Mammary epithelial cell (primary cell): ENCODE measurements at regions of chr11 and their contacts with region 1.

Region 1: GRCh38 chr11:130861902-130862860 is 54.1 kb downstream of the SNX19 start:
- DNase-seq: peak; percentile 70
- H3K4me3 ChIP-seq: peak overlapping the region in 1 of 3 experiments; percentile 23
- H3K27ac ChIP-seq: no peak overlapping the region
- H3K4me1 ChIP-seq: peaks cover 3% of the 10 kb centered on the region
- H3K27me3 ChIP-seq: no peaks in the 10 kb centered on the region
- CTCF ChIP-seq: peak; percentile 98 to 100

Region 2: DNA sequence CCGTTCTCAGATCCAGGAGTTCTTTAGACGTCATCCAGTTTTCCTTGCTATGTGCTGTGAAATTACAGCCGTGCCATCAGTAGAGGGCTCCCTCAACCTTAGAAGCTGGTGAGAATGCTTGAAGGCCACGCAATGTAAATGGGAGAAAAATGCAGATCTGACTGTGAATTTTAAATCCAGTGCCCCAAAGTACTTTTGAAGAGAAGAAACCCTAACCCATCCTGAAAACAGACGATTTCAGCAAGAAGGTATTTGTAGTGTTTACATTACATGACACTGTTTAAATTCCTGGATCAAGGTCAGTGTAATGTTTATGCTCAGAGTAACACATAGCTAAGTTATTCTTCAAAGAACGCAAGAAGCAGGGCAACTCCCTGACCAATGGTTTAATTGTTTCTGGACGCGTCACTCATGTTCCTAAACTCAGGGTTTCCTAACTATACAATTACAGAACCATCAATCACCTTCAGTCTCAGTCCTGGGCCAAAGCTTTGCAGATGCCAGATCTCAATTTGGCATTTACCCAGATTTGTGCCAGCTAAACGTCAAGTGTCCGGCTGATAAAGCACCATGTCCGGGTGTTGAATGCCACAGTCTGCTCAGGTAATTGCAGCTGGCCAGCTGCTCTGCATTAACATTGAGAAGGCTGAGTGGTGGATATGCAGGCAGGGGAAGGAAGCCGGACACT is 472.0 kb before region 1 on chr11:
- CTCF ChIA-PET with region 1: no interaction called
- dilution Hi-C with region 1: no loop called
- in situ Hi-C with region 1: no loop called
- intact Hi-C with region 1: loop called (anchors 1 kb)
- DNase-seq: peak; percentile 48
- H3K4me3 ChIP-seq: no peak overlapping the region
- H3K27ac ChIP-seq: no peak overlapping the region
- H3K4me1 ChIP-seq: no peaks in the 10 kb centered on the region
- H3K27me3 ChIP-seq: peaks cover 6% of the 10 kb centered on the region
- CTCF ChIP-seq: peak; percentile 21 to 71

Region 3: GRCh38 chr11:130427581-130428315 is 434.4 kb before region 1 on chr11:
- CTCF ChIA-PET with region 1: interaction called, 12 read pairs
- dilution Hi-C with region 1: loop called (anchors 5 kb)
- in situ Hi-C with region 1: loop called (anchors 5 to 10 kb)
- intact Hi-C with region 1: no loop called
- DNase-seq: no peak
- H3K4me3 ChIP-seq: peak overlapping the region in 1 of 3 experiments; percentile 14
- H3K27ac ChIP-seq: no peak overlapping the region
- H3K4me1 ChIP-seq: peaks cover 9% of the 10 kb centered on the region
- H3K27me3 ChIP-seq: peaks cover 37% of the 10 kb centered on the region
- CTCF ChIP-seq: no peak

Region 4: DNA sequence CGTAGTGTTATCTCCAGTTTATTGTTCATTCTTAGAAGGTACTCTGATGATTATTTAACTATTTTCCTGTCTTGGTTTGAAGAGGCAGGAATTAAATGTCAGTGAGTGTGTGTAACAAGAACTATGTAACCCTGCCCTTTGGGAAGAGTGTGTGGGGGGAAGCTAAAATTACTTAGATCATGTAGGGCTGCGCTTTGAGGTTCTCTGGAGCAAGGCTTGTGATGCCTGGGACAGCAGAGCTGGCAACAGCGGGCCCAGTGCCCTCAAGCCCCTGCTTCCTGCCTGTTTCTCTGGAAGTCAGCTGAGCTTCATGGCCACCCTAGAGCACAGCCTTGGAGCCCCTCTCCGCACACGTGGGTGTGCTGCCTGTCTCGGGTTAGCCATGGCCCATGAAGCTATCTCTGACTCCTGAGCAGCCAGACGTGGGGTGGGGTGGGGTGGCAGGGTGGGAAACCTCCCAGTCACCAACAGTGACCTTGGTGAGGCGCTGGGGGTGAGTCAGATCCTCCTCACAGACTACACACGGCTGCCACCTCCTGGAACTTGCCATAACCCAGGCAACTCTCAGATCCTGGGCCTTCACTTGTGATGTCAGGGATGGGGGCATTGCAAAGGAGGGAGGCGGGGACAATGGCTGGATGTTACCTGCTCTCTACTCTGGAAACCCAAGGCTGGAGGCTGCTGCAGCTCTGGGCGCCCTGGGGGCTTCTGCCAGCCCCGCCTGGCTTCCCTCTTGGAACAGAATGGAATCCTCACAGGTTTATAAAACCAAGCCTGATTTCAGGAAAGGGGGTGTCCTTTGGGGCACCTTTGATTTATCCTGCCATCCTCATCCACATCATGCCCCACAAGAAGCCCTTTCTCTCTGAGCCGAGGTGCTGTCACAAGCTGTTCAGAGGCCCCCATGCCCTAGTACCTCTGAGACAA is 34.5 kb before region 1 on chr11:
- CTCF ChIA-PET with region 1: no interaction called
- dilution Hi-C with region 1: no loop called
- in situ Hi-C with region 1: no loop called
- intact Hi-C with region 1: loop called (anchors 1 kb)
- DNase-seq: peak; percentile 73
- H3K4me3 ChIP-seq: no peak overlapping the region
- H3K27ac ChIP-seq: no peak overlapping the region
- H3K4me1 ChIP-seq: no peaks in the 10 kb centered on the region
- H3K27me3 ChIP-seq: no peaks in the 10 kb centered on the region
- CTCF ChIP-seq: peak; percentile 65 to 80

Region 5: DNA sequence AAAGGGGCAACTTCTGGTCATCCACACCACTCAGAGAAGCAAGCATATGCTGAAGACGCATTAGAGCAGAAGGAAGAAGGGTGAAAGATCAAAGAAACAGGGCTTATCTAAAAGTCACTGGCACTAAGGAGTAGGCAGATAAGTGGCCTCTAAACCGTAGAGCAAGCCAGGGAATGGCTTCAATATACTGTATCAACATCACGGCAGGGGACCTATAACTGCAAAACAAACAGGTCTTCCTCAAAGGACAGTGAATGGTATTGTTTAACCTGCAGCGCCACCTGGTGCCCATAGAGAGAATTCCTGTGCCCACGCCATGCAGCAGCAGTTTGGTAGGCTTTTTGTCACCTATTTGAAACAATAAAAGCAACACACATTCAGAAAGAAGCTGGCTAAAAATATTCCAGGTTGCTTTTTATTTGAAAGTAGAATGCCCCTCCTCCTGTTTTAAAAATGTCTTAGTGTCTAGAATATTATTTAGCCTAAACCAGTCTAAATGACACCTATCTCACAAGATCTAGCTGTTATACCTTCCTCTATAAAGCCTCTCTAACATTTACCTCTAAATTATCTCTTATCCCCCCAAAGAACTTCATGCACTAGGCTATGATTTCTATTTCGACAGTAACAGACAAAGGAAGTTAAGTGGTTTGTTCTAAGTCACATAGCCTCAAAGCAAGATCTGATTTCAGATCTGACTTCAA is 32.3 kb after region 1 on chr11:
- CTCF ChIA-PET with region 1: no interaction called
- dilution Hi-C with region 1: no loop called
- in situ Hi-C with region 1: no loop called
- intact Hi-C with region 1: loop called (anchors 1 kb)
- DNase-seq: peak; percentile 46
- H3K4me3 ChIP-seq: no peak overlapping the region
- H3K27ac ChIP-seq: no peak overlapping the region
- H3K4me1 ChIP-seq: peaks cover 18% of the 10 kb centered on the region
- H3K27me3 ChIP-seq: no peaks in the 10 kb centered on the region
- CTCF ChIP-seq: peak; percentile 86 to 98

Region 6: GRCh38 chr11:131773626-131774025 is 911.4 kb after region 1 on chr11:
- CTCF ChIA-PET with region 1: no interaction called
- dilution Hi-C with region 1: no loop called
- in situ Hi-C with region 1: no loop called
- intact Hi-C with region 1: no loop called
- DNase-seq: no peak
- H3K4me3 ChIP-seq: no peak overlapping the region
- H3K27ac ChIP-seq: no peak overlapping the region
- H3K4me1 ChIP-seq: no peaks in the 10 kb centered on the region
- H3K27me3 ChIP-seq: peaks cover 10% of the 10 kb centered on the region
- CTCF ChIP-seq: no peak